Activated B cell treated with CpG ODN at 0.5 μM for 24 hours (primary cell): ENCODE measurements at regions of chr4 and their contacts with region 1.

Region 1: DNA sequence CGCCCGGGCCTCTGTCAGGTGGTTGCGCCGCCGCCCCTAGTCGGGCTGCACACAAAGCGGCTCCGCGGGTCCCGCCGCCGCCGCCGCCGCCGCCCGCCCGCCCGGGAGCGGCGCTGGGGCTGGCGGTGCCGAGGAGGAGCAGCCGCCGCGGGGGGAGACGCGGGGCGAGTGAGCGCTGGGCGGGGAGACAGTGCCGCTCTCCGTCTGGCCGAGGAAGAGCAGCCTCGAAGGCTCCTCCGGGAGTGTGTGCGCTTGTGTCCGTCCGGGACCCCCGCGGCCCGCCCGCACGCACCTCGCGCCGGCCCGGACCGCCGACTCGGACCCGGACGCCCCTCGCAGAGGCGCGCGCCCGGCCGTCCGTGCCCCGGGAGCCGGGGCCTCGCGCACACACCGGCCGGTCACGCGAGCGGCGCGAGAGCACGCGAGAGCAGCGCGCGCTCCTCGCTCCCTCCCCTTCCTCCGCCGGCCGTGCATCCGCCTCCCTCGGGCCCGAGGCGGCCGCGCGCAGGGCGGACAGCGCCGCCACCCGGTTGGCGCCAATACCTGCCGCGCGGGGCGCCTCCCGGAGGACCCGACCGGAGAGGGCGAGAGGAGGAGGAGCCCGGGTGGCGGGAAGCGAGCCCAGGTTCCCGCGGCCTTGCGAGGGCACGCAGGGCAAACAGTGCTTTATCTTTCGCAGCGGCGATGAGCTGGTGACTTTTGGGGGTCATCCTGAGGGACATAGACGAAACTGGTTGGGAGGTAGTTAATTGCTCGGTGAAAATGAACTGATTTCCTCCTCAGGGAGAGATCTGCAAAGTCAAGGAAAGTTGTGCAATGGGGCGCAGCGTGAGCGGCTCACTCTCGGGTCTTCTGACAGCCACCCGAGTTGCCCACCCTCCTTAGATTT is at the start of gene PDS5A:
- DNase-seq: peak; percentile 91
- ATAC-seq: peak; percentile 86
- H3K4me3 Mint-ChIP-seq: peak within 1 kb of the TSS; percentile 87
- H3K27ac Mint-ChIP-seq: peak within 1 kb of the TSS; percentile 92
- H3K4me1 Mint-ChIP-seq: peaks cover 32% of the 10 kb centered on the region
- H3K27me3 Mint-ChIP-seq: no peaks in the 10 kb centered on the region
- CTCF ChIP-seq: peak; percentile 27
- total RNA-seq, gene PDS5A: 91.9 and 103 TPM in 2 replicates

Region 2: DNA sequence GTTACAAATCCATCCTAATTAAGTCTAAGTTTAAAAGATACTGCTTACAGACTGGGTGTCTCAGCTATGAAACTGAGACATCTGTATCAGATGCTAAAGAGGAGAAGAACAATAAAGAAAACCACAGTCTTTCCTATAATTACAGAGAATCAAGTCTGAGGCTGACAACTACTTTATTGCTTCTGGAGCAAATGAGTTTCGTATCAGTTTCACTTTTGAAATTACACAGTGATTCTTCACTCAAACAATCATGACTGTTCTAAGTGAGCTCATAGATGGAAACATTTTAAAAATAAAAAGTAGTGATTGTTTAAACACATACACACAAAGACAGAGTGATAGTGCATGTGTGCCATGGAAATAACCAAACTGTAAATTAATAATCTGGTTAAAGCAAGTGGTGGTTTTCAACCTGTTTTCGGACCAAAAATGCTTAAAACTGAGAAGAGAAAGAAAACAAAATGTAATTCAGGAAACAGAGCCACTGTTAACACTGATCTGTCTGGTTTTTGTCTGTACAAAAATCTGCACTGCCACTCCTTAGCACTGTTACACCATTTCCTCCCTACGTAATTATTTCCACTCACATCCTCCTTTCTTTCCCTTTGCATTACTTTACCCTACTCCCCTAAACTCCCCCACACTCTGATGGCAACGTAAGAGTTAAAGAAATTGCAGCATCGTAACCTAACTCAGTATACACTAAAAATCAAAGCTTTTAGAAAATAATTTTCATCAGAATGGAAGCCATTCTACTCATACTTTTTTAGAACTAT is 624.1 kb before region 1 on chr4:
- CTCF ChIA-PET with region 1: no interaction called
- POLR2A ChIA-PET with region 1: no interaction called
- intact Hi-C with region 1: loop called (anchors 5 kb)
- DNase-seq: no peak
- ATAC-seq: peak; percentile 66
- H3K4me3 Mint-ChIP-seq: peak overlapping the region; percentile 69
- H3K27ac Mint-ChIP-seq: peak overlapping the region; percentile 87
- H3K4me1 Mint-ChIP-seq: peaks cover 59% of the 10 kb centered on the region
- H3K27me3 Mint-ChIP-seq: no peaks in the 10 kb centered on the region
- CTCF ChIP-seq: no peak

Region 3: GRCh38 chr4:39527273-39528060 is 450.3 kb before region 1 on chr4 and contains the start of gene UGDH:
- CTCF ChIA-PET with region 1: interaction called, 3 read pairs
- POLR2A ChIA-PET with region 1: no interaction called
- intact Hi-C with region 1: loop called (anchors 1 kb)
- DNase-seq: peak; percentile 94
- ATAC-seq: peak; percentile 99
- H3K4me3 Mint-ChIP-seq: peak within 1 kb of the TSS; percentile 98
- H3K27ac Mint-ChIP-seq: peak within 1 kb of the TSS; percentile 93
- H3K4me1 Mint-ChIP-seq: peaks cover 20% of the 10 kb centered on the region
- H3K27me3 Mint-ChIP-seq: no peaks in the 10 kb centered on the region
- CTCF ChIP-seq: no peak
- total RNA-seq, gene UGDH: 40.6 and 43.3 TPM in 2 replicates

Region 4: GRCh38 chr4:39754309-39754708 is 223.4 kb before region 1 on chr4:
- CTCF ChIA-PET with region 1: no interaction called
- POLR2A ChIA-PET with region 1: no interaction called
- intact Hi-C with region 1: loop called (anchors 10 kb)
- DNase-seq: no peak
- ATAC-seq: peak; percentile 60
- H3K4me3 Mint-ChIP-seq: peak overlapping the region; percentile 33
- H3K27ac Mint-ChIP-seq: peak overlapping the region; percentile 69
- H3K4me1 Mint-ChIP-seq: peaks cover 24% of the 10 kb centered on the region
- H3K27me3 Mint-ChIP-seq: no peaks in the 10 kb centered on the region
- CTCF ChIP-seq: no peak

Region 5: DNA sequence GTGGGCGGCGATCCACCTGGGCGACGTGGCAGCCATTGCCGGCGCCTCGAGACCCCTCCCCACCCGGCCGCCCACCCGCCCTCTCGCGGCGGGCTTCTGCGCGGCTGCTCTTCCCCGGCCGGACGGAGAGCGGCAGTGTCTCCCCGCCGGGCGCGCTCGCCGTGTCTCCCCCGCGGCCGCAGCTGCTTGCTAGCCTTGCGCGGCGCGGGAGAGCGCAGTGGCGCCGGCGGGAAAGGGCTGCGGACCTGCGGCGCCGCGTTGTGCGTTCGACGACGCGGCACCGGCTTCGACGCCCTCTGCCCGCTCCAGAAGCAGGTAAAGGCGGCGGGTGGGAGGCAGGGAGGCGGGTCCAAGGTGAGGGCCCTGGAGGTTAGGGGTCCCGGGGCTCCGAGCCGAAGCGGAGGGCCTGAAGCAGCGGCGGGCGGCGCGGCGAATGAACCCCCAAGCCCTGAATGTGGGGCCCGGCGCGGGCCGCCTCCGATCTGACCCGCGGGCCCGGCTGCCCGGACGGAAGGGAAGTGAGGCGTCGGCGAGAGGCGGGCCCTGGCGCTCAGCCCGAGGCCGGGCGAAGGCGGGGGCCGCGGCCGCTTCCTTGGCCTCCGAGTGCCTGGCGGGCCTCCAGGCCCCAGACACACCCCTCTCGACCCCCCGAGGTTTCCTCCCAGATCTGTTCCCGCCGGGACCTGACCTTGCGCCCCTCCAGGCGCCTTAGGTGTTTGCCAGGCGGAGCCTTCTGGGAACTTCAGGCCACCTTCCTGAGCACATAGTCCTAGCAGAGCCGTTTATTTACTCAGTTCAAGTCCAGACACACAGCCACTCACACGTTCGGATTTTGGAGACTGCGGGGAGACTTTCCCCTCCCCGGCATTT is 79.2 kb after region 1 on chr4 and contains the start of gene N4BP2:
- CTCF ChIA-PET with region 1: interaction called, 5 read pairs
- POLR2A ChIA-PET with region 1: no interaction called
- intact Hi-C with region 1: loop called (anchors 1 kb)
- DNase-seq: peak; percentile 75
- ATAC-seq: peak; percentile 68
- H3K4me3 Mint-ChIP-seq: peak within 1 kb of the TSS; percentile 95
- H3K27ac Mint-ChIP-seq: peak within 1 kb of the TSS; percentile 92
- H3K4me1 Mint-ChIP-seq: peaks cover 27% of the 10 kb centered on the region
- H3K27me3 Mint-ChIP-seq: no peaks in the 10 kb centered on the region
- CTCF ChIP-seq: no peak
- total RNA-seq, gene N4BP2: 6.0 and 6.2 TPM in 2 replicates

Region 6: DNA sequence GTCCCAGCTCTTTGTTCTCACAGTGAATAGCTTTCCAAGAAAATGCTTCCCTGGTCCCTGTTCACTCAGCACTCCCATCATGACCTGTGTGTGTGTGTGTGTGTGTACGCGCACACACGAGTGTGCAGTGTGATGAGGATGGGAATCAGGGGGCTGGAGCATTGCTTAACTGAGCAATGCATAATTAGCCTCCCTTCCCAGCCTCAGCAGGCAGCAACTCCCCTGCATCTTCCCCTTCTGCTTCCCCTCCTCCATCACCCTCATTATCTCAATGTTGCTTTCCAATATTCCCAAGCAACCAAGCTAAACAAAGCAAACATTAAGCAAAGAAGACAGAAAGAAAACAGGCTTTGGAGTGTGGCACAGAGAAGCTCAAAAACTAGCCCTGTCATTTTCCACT is 515.0 kb after region 1 on chr4:
- CTCF ChIA-PET with region 1: no interaction called
- POLR2A ChIA-PET with region 1: no interaction called
- intact Hi-C with region 1: no loop called
- DNase-seq: no peak
- ATAC-seq: no peak
- H3K4me3 Mint-ChIP-seq: no peak overlapping the region
- H3K27ac Mint-ChIP-seq: no peak overlapping the region
- H3K4me1 Mint-ChIP-seq: no peaks in the 10 kb centered on the region
- H3K27me3 Mint-ChIP-seq: no peaks in the 10 kb centered on the region
- CTCF ChIP-seq: no peak

Region 7: DNA sequence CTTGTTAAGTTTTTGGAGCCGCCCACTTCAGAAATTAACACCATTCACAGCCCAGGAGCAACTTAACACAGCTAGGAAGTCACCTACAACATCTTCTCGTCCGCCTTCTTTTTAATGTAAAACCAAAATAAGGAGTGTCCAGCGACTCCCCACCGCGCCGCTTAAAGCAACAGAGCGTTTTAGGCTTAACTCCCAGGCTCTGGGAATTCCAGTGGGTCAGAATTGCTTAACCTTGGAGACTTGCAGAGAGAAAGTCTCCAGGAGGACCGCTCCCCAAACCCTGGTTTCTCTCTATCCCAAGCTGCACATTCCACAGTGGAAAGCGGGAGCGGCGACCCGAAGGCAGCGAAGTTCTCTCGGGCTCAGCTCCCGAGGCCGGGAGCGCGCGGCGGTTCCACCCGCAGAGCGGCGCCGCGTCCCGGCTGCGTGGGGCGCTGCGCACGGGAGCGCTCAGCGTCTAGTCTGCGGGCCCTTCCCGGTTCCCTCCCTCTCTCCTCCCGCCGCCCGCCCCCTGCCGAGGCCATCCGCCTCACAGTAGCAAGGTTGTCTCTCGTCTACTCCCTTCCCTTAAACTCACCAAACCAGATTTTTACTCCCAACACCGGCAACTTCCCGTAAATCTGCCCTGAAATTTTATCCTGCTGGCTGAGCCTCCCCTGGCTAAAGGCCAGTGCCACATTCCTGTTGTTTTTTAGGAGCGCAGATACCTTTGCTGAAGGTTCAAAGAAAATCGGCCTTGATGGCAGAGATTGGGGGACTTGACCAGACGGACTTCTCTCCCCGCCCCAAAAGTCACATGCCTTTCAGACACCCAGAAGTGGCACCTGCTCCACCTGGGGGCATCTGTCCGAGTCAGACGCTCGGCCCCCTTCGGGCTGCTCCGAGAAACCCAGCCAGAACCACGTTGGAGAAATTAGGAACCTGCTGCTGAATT is 651.9 kb after region 1 on chr4 and contains the start of gene RBM47:
- CTCF ChIA-PET with region 1: no interaction called
- POLR2A ChIA-PET with region 1: no interaction called
- intact Hi-C with region 1: no loop called
- DNase-seq: peak; percentile 29
- ATAC-seq: peak; percentile 65
- H3K4me3 Mint-ChIP-seq: peak within 1 kb of the TSS; percentile 93
- H3K27ac Mint-ChIP-seq: peak within 1 kb of the TSS; percentile 84
- H3K4me1 Mint-ChIP-seq: peaks cover 22% of the 10 kb centered on the region
- H3K27me3 Mint-ChIP-seq: peaks cover 5% of the 10 kb centered on the region
- CTCF ChIP-seq: no peak
- total RNA-seq, gene RBM47: 6.3 and 8.0 TPM in 2 replicates